Activated naive CD4-positive, alpha-beta T cell treated with anti-CD3 and anti-CD28 coated beads for 36 hours (primary cell): ENCODE measurements at regions of chr4 and their contacts with region 1.

Region 1: GRCh38 chr4:184792950-184793555 is 32.7 kb downstream of the ACSL1 start:
- DNase-seq: peak; percentile 60
- H3K4me3 Mint-ChIP-seq: no peak overlapping the region
- H3K27ac Mint-ChIP-seq: no peak overlapping the region
- H3K4me1 Mint-ChIP-seq: peaks cover 22% of the 10 kb centered on the region
- H3K27me3 Mint-ChIP-seq: peaks cover 2% of the 10 kb centered on the region

Region 2: GRCh38 chr4:184782731-184783373 is 10.2 kb before region 1 on chr4:
- CTCF ChIA-PET with region 1: interaction called, 11 read pairs
- intact Hi-C with region 1: no loop called
- DNase-seq: peak; percentile 11
- H3K4me3 Mint-ChIP-seq: no peak overlapping the region
- H3K27ac Mint-ChIP-seq: no peak overlapping the region
- H3K4me1 Mint-ChIP-seq: peaks cover 16% of the 10 kb centered on the region
- H3K27me3 Mint-ChIP-seq: no peaks in the 10 kb centered on the region

Region 3: GRCh38 chr4:184851200-184851541 is 58.1 kb after region 1 on chr4:
- CTCF ChIA-PET with region 1: interaction called, 4 read pairs
- intact Hi-C with region 1: loop called (anchors 1 kb)
- DNase-seq: peak; percentile 74
- H3K4me3 Mint-ChIP-seq: no peak overlapping the region
- H3K27ac Mint-ChIP-seq: no peak overlapping the region
- H3K4me1 Mint-ChIP-seq: peaks cover 29% of the 10 kb centered on the region
- H3K27me3 Mint-ChIP-seq: no peaks in the 10 kb centered on the region

Region 4: GRCh38 chr4:184924516-184924915 is 131.5 kb after region 1 on chr4:
- CTCF ChIA-PET with region 1: no interaction called
- intact Hi-C with region 1: no loop called
- DNase-seq: no peak
- H3K4me3 Mint-ChIP-seq: no peak overlapping the region
- H3K27ac Mint-ChIP-seq: no peak overlapping the region
- H3K4me1 Mint-ChIP-seq: no peaks in the 10 kb centered on the region
- H3K27me3 Mint-ChIP-seq: no peaks in the 10 kb centered on the region